Activated CD4-positive, alpha-beta T cell treated with anti-CD3 and anti-CD28 coated beads, Interleukin-2, amount 10 ng/mL, durations not matched to agents 24 days and 14 days (primary cell): ENCODE measurements at regions of chr20 and their contacts with region 1.

Region 1: DNA sequence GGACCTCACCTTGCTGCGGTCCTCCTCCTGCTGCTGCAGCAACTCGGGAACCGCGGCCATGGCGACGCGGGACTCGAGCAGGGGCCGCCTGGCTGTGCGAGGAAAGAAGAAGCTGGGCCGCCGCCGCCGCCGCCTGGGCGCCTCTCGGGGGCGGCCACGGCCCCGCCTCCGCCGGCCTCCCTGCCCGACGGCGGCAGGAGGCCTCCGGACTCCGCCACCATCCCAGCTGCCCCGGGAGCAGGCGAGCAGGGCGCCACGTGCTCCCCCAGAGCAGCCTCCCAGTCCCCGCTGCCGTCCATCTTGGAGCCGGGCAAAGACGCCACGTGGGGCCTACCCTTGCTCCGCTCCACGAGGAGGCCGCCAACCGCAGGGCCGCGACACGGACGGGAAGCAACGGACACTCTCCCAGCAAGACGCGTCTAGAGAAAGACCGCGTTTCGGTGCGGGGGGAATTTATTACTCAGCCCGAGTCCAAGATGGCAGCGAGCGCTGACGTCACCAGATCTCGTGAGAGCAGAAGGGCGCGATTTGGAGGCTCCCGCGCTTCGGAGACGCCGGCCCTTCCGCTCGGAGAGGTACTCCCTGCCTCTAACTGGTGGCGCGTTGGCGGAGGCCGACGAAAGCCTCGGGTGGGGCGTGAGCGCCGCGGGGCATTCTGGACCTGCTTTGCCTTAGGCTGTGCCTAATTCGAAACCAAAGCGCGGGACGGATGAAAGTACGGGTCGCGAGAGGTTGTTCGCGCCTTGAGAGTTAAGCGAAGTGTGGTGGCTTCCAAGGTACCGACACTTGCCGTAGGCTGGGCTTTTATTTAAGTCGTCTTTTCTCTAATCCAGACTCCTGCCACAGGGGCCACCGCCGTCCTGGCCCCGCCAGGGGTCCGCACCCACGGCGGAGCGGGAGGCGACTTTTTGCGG is at the starts of genes MGME1 and SNX5:
- DNase-seq: peak; percentile 100
- H3K4me3 Mint-ChIP-seq: peak within 1 kb of the TSS; percentile 96
- H3K27ac Mint-ChIP-seq: peak within 1 kb of the TSS; percentile 99
- H3K4me1 Mint-ChIP-seq: peaks cover 51% of the 10 kb centered on the region
- H3K27me3 Mint-ChIP-seq: no peaks in the 10 kb centered on the region
- total RNA-seq, gene MGME1: 32.7 and 34.3 TPM in 2 replicates
- total RNA-seq, gene SNX5: 230 and 240 TPM in 2 replicates

Region 2: GRCh38 chr20:17504898-17505635 is 463.6 kb before region 1 on chr20:
- intact Hi-C with region 1: loop called (anchors 10 kb)
- DNase-seq: peak; percentile 90
- H3K4me3 Mint-ChIP-seq: peak overlapping the region; percentile 88
- H3K27ac Mint-ChIP-seq: peak overlapping the region; percentile 92
- H3K4me1 Mint-ChIP-seq: peaks cover 47% of the 10 kb centered on the region
- H3K27me3 Mint-ChIP-seq: peaks cover 4% of the 10 kb centered on the region

Region 3: GRCh38 chr20:17558154-17558940 is 410.3 kb before region 1 on chr20:
- intact Hi-C with region 1: loop called (anchors 2 kb)
- DNase-seq: peak; percentile 71
- H3K4me3 Mint-ChIP-seq: peak overlapping the region; percentile 74
- H3K27ac Mint-ChIP-seq: peak overlapping the region; percentile 97
- H3K4me1 Mint-ChIP-seq: peaks cover 36% of the 10 kb centered on the region
- H3K27me3 Mint-ChIP-seq: no peaks in the 10 kb centered on the region

Region 4: GRCh38 chr20:17710379-17711266 is 258.0 kb before region 1 on chr20:
- intact Hi-C with region 1: no loop called
- DNase-seq: no peak
- H3K4me3 Mint-ChIP-seq: no peak overlapping the region
- H3K27ac Mint-ChIP-seq: no peak overlapping the region
- H3K4me1 Mint-ChIP-seq: no peaks in the 10 kb centered on the region
- H3K27me3 Mint-ChIP-seq: peaks cover 5% of the 10 kb centered on the region

Region 5: DNA sequence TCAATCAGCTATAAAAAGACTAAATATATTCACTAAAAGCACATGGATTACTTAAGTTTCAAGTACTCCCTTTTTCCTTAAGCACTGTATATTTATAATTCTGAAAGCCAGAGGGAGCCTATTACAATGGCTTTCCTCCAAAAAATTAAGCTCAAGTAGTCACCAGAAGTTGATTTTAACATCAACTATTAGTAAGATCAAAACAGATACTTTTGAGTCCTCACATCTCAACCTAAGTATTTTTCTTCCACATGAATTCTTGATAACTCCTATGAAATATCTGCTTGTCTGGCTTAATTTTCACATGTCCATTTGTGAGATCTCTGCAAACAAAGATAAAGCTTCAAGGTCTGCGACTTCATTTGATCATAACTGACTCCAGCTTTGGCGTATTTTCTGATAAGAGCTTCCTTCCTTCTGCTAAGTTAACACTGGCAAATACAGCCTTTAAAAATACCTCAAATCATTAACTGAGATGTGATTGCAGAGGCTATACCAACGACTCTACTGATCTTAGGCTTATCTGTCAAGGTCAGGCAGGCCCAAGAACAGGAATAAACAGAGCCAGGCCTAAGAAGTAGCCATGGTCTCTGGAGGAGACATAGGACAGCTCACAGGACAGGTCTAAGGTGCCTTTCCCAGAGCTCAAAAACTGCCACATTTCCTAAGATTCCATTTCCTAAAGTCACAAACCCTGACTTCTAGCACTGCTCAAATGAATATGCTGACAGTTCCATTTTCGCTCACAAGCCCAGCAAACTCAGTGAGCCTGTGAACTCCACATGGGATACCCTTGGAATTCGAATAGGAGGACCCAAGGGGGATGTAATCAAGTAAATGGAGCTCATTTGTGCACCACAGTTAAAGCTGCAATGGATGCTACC is 10.0 kb before region 1 on chr20:
- intact Hi-C with region 1: loop called (anchors 1 kb)
- DNase-seq: no peak
- H3K4me3 Mint-ChIP-seq: peak overlapping the region; percentile 44
- H3K27ac Mint-ChIP-seq: peak overlapping the region; percentile 71
- H3K4me1 Mint-ChIP-seq: peaks cover 76% of the 10 kb centered on the region
- H3K27me3 Mint-ChIP-seq: no peaks in the 10 kb centered on the region

Region 6: DNA sequence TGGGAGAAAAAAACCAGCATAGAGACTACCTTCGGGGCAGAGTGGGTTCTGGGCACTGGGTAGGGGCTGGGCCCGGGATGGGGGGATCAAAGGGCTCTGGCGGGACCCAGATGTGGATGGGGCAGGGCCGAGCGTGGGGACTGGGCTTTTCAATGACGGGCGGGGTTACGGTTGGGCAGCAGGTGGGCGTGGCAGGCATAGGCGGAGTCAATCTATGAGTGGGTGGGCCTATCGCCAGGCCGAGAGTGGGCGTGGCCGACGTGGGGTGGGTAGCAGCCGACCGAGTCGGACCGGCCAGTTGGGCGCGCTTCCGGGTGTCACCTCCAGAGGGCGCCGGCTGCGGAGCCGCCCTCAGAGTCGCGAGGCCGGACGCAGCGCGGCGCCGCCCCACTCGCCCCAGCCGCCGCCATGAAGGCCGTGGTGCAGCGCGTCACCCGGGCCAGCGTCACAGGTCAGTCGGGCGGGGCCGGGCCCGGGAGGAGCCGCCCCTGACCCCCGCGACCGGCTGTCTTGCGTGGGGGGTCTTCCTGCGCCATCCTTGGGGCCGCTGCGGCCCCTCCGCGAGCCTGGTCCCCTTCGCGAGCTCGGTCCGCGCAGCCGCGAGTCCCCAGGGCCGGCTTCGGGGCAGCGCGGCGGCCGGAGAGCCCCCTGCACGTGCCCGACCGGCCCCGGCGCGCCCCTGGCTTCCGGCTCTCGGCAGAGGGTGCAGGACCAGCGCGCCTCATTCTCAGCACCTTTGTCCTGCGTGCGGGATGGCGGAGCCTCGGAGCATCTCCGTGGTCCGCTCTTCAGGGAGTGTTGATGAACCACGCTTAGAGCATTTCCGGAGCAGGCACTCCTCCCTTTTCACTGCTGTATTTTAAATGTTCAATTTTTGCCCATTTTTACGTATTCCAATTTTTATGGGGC is 619.3 kb after region 1 on chr20 and contains the start of gene DTD1:
- intact Hi-C with region 1: loop called (anchors 2 kb)
- DNase-seq: peak; percentile 96
- H3K4me3 Mint-ChIP-seq: peak within 1 kb of the TSS; percentile 94
- H3K27ac Mint-ChIP-seq: peak within 1 kb of the TSS; percentile 88
- H3K4me1 Mint-ChIP-seq: peaks cover 25% of the 10 kb centered on the region
- H3K27me3 Mint-ChIP-seq: peaks cover 7% of the 10 kb centered on the region
- total RNA-seq, gene DTD1: 49.2 and 49.9 TPM in 2 replicates